Mammary epithelial cell (primary cell): ENCODE measurements at regions of chr14 and their contacts with region 1.

Region 1: GRCh38 chr14:63867933-63868921 is 15.4 kb downstream of the SYNE2 start:
- DNase-seq: no peak
- H3K4me3 ChIP-seq: no peak overlapping the region
- H3K27ac ChIP-seq: no peak overlapping the region
- H3K4me1 ChIP-seq: peaks cover 13% of the 10 kb centered on the region
- H3K27me3 ChIP-seq: no peaks in the 10 kb centered on the region
- CTCF ChIP-seq: no peak

Region 2: DNA sequence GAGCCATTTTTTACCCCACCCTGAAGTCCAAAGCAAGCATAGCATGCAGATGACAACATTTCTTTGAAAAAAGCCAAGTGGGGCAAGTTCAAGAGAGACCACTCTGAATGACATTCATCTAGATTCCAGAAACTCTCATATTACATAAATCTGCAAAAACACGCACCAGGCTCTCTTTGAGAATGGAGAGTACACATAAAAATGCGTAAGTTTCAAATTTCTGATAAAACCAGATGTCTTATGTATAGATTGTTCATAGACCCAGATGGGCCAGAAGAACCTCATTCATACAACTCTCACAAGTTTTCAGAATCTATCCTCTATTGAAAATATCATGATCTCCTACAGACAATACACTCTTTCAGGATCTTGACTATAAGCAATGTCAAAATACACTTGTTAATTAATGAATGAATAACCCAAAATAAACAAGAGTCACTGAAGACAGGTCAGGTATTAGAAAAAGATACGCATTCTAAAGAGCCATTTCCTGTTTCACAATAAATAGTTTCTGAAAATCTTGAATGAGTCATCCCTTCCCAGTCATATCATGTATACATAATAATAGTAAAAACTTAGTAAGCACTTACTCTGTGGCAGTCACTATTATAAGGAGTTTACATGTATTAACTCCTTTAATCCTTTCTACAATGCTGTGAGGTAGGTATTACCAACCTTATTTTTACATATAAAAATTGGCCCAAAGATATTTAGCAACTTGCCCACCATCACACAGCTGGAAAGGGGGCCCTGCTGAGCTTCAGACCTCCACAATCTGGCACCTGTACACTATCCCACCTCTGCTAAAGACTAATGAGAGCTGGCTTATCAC is 397.0 kb before region 1 on chr14:
- CTCF ChIA-PET with region 1: no interaction called
- dilution Hi-C with region 1: no loop called
- in situ Hi-C with region 1: no loop called
- intact Hi-C with region 1: no loop called
- DNase-seq: peak; percentile 84
- H3K4me3 ChIP-seq: no peak overlapping the region
- H3K27ac ChIP-seq: peak overlapping the region; percentile 47
- H3K4me1 ChIP-seq: peaks cover 33% of the 10 kb centered on the region
- H3K27me3 ChIP-seq: no peaks in the 10 kb centered on the region
- CTCF ChIP-seq: no peak

Region 3: DNA sequence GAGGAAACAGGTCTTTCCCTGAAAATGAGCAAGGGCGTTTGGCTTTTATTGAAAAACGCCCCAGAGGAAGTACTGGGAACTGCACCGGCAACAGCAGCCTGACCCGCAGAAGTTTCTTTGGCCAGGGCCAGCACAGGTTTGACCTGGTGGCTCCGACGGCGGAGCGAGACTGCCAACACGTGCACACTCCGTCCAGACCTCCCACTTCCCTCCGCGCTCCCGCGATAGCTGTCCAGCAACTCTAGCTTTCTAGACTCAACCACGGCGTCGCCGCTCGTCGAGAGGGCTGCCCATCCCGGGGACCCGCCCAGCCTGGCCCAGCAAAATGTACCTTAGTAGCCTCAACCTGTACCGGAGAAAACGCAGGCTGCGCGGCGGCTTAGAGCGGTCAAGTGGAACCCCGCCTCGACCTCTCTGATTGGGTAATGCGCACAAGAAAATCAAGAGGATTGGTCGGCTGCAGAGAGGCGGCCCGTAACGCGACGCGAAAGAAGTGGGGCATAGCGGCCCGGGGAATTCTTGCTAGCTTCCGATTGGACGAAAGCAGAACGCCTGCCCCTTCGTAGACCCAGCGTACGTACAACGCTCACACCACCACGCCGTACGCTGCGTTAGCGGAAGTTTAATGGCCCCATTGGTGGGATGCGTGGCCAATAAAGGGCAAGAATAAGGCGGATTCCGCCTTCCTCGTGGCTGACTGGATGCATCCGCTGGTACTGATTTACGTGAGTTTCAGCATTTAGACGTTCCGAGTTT is 226.6 kb before region 1 on chr14 and contains the start of gene WDR89:
- CTCF ChIA-PET with region 1: no interaction called
- dilution Hi-C with region 1: no loop called
- in situ Hi-C with region 1: no loop called
- intact Hi-C with region 1: loop called (anchors 1 kb)
- DNase-seq: peak; percentile 100
- H3K4me3 ChIP-seq: peak within 1 kb of the TSS; percentile 66 to 91 (median 77)
- H3K27ac ChIP-seq: peak within 1 kb of the TSS; percentile 97
- H3K4me1 ChIP-seq: peaks cover 3% of the 10 kb centered on the region
- H3K27me3 ChIP-seq: no peaks in the 10 kb centered on the region
- CTCF ChIP-seq: peak; percentile 77 to 83
- total RNA-seq, gene WDR89: 10.5 to 13.0 TPM

Region 4: DNA sequence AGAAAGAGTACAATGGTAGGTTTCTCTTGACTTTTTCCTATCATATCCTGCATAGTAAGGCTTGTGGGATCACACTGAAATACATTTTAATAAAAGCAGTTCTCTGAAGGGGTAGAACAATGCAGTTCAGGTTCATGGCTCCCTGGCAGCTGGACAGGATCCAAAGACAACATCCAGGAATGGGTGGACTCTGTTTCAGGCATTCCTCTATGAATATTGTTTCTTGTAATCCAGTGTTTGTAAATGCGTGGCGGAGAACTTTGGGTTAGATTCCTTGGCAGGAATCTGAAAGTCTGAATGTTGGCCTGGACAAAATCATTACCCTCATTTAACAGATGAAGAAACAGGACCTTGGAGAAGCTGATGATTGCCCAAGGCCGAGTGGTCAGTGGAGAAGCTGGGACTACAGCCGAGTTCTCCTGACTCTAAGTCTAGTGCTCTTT is 28.1 kb after region 1 on chr14:
- CTCF ChIA-PET with region 1: no interaction called
- dilution Hi-C with region 1: no loop called
- in situ Hi-C with region 1: no loop called
- intact Hi-C with region 1: loop called (anchors 2 kb)
- DNase-seq: peak; percentile 80
- H3K4me3 ChIP-seq: peak overlapping the region in 2 of 3 experiments; percentile 0 to 8
- H3K27ac ChIP-seq: peak overlapping the region; percentile 47
- H3K4me1 ChIP-seq: peaks cover 28% of the 10 kb centered on the region
- H3K27me3 ChIP-seq: no peaks in the 10 kb centered on the region
- CTCF ChIP-seq: no peak

Region 5: DNA sequence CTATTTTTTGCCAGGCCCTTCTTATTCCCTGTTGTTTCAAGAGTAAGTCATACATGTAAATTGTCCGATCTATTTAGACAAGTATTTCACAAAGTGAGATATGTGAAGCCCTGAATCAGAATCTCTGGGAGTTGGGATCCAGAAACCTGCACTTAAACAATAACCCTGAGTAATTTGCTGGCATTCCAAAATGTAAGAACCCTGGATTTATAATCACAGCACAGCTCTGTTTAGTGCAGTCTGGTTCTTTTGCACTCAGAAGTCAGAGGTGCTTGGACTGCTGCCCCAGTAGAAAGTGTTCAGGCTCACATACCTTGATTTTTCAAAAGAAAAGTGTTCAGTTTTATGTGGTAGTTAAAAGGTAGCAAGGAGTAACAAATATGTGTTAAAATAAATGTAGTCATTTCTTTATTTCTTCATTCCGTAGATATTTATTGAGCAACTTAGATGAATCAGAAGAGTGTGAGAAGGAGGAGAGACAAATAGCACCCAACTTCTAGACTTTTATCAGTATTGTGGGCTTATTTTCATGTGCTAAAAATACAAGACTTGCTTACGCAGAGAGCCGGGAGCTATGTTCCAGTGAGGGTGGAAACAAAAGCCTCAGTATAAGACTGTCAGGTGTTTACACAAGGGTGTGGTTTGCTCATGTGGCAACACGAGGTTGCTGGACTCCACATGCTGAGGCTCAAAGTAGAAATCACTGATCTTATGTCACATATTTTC is 54.6 kb after region 1 on chr14:
- CTCF ChIA-PET with region 1: no interaction called
- dilution Hi-C with region 1: no loop called
- in situ Hi-C with region 1: no loop called
- intact Hi-C with region 1: loop called (anchors 2 kb)
- DNase-seq: peak; percentile 98
- H3K4me3 ChIP-seq: peak overlapping the region in 2 of 3 experiments; percentile 7 to 18
- H3K27ac ChIP-seq: peak overlapping the region; percentile 98
- H3K4me1 ChIP-seq: peaks cover 21% of the 10 kb centered on the region
- H3K27me3 ChIP-seq: no peaks in the 10 kb centered on the region
- CTCF ChIP-seq: no peak